ENCODE measurements at regions of chr1 and their contacts with region 1.

Region 1: DNA sequence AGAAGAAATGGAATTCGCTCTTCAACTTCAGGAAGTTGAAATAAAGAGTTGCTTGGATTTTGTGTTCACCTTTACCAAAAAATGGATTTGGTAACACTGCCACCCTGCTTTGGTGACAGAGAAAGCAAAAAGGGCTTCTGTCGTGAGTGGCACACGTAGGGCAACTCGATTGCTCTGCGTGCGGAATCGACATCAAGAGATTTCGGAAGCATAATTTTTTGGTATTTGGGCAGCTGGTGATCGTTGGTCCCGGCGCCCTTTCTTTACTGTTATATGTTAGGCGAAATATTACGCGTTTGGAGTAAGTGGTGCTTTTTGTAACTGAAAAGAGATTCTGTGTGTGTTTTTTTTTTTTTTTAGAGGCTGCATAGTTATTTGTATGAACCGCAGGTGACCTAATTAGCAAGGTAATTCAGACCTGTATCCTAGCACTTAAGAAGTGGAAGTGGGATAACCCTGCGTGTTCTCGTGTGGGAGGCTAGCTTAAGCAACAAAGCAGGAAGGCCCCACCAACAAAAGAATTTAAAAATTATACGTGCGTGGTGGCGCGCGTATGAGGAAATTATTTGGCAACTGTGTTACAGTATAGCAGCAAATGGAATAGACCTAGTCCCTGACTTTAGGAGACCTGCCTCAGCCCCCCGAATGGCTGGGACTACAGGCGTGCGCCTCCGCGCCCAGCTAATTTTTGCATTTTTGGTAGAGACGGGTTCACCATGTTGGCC is at the start of gene RNU11:
- DNase-seq: peak; percentile 90
- H3K4me3 Mint-ChIP-seq: peak within 1 kb of the TSS; percentile 79
- H3K27ac Mint-ChIP-seq: peak within 1 kb of the TSS; percentile 99
- H3K4me1 Mint-ChIP-seq: peaks cover 33% of the 10 kb centered on the region
- H3K27me3 Mint-ChIP-seq: no peaks in the 10 kb centered on the region
- total RNA-seq, gene RNU11: not detected

Region 2: GRCh38 chr1:28505406-28506187 is 143.0 kb before region 1 on chr1 and contains the start of gene RCC1:
- CTCF ChIA-PET with region 1: interaction called, 3 read pairs
- POLR2A ChIA-PET with region 1: interaction called, 58 read pairs
- DNase-seq: peak; percentile 97
- H3K4me3 Mint-ChIP-seq: peak within 1 kb of the TSS; percentile 98
- H3K27ac Mint-ChIP-seq: peak within 1 kb of the TSS; percentile 97
- H3K4me1 Mint-ChIP-seq: peaks cover 42% of the 10 kb centered on the region
- H3K27me3 Mint-ChIP-seq: no peaks in the 10 kb centered on the region
- total RNA-seq, gene RCC1: 47.6 to 50.7 TPM

Region 3: DNA sequence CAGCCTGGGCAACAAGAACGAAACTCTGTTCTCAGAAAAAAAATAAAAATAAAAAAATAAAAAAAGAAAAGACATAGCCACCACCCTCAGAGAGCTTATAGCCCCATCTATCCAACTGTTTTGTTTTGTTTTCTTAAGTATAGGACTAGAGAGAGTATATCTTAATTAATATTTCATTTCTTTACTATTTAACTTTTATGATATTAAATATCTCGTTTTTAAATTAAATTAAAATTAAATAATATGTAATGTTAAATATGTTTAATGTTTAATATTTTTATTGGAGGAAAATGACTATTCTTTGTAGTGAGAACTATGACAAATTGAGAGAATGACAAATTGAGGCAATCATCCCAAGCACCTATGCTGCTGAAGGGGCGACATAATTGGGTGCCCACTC is 55.0 kb after region 1 on chr1:
- CTCF ChIA-PET with region 1: no interaction called
- POLR2A ChIA-PET with region 1: interaction called, 17 read pairs
- DNase-seq: no peak
- H3K4me3 Mint-ChIP-seq: no peak overlapping the region
- H3K27ac Mint-ChIP-seq: no peak overlapping the region
- H3K4me1 Mint-ChIP-seq: peaks cover 11% of the 10 kb centered on the region
- H3K27me3 Mint-ChIP-seq: no peaks in the 10 kb centered on the region

Region 4: DNA sequence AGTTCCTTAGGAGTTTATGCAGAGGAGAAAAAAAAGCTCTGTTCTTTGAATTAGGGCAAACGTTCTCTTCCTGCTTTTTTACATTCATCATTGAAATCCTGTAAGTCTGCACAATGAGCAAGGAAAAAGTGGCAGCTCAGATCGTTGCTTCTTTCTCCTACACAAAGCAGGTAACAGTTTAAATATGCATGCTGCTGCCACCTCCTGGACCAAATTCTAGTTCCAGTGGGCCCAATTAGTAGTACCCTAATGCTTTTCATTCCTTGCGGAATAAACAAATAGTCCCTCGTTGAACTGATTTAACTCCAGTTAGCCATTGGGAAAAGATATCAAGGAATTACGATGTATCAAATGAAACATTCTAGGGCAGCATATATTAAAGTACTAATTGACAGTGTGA is 108.2 kb after region 1 on chr1:
- CTCF ChIA-PET with region 1: no interaction called
- POLR2A ChIA-PET with region 1: interaction called, 10 read pairs
- DNase-seq: no peak
- H3K4me3 Mint-ChIP-seq: no peak overlapping the region
- H3K27ac Mint-ChIP-seq: no peak overlapping the region
- H3K4me1 Mint-ChIP-seq: peaks cover 14% of the 10 kb centered on the region
- H3K27me3 Mint-ChIP-seq: no peaks in the 10 kb centered on the region

Region 5: DNA sequence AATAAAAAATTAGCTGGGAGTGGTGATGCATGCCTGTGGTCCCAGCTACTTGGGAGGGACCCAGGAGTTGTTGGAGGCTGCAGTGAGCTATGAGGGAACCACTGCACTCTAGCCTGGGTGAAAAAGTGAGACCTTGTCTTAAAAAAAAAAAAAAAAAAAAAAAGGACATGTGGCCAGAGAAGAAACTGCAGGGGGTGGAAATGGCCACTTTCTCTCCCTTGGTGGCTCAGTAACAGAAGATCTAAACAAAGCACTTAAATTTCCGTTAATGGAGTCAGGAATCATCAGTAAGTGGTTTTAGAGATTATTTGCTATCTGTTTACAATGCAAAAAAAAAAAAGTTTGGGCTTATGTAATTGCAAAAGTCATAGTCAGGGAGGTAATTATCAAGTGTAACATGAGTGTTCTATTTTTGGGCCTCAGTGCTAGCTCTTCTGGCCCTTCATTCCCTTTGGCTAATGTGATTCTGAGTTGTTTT is 144.0 kb after region 1 on chr1:
- CTCF ChIA-PET with region 1: no interaction called
- POLR2A ChIA-PET with region 1: no interaction called
- DNase-seq: no peak
- H3K4me3 Mint-ChIP-seq: no peak overlapping the region
- H3K27ac Mint-ChIP-seq: no peak overlapping the region
- H3K4me1 Mint-ChIP-seq: peaks cover 5% of the 10 kb centered on the region
- H3K27me3 Mint-ChIP-seq: peaks cover 12% of the 10 kb centered on the region

Region 6: GRCh38 chr1:28877132-28877781 is 228.6 kb after region 1 on chr1:
- CTCF ChIA-PET with region 1: interaction called, 23 read pairs
- POLR2A ChIA-PET with region 1: interaction called, 12 read pairs
- DNase-seq: peak; percentile 81
- H3K4me3 Mint-ChIP-seq: no peak overlapping the region
- H3K27ac Mint-ChIP-seq: no peak overlapping the region
- H3K4me1 Mint-ChIP-seq: peaks cover 6% of the 10 kb centered on the region
- H3K27me3 Mint-ChIP-seq: peaks cover 4% of the 10 kb centered on the region

Measured in activated CD4-positive, alpha-beta memory T cell treated with anti-CD3 and anti-CD28 coated beads, Interleukin-2, amount 10 ng/mL, durations not matched to agents 7 days and 5 days (primary cell).